ENCODE measurements at regions of chr12 and their contacts with region 1.

Region 1: DNA sequence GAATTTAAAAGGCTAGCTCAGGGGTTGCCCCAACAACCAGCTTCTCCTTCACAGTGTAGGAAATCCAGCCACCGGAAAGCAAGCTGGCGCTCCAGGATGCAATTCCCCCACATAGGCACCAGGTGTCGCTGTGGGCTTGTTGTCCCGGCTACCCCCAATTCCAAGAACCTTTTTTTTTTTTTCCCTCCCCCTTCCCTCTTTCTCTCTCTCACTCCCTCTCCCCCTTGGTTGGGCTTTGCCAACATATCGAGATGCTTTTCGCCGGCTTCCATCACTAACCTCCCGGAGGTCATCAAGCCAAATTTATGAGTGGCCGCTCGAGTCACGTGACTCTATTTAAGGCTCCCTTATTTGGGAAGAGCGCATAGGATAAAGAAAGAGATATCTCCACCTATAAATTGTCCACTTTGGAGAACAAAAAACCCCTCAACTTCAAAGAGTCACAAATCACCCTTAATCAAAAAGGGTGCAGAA is at the start of gene HOXC5:
- DNase-seq: peak; percentile 84
- ATAC-seq: peak; percentile 14; the same call in 1 of the 2 replicates
- H3K4me3 ChIP-seq: peak within 1 kb of the TSS; percentile 70
- H3K27ac ChIP-seq: no peak within 1 kb of the TSS
- H3K4me1 ChIP-seq: peaks cover 21% of the 10 kb centered on the region
- H3K27me3 ChIP-seq: no peaks in the 10 kb centered on the region
- CTCF ChIP-seq: peak; percentile 97
- total RNA-seq, gene HOXC5: 0.26 and 0.29 TPM in 2 replicates

Region 2: DNA sequence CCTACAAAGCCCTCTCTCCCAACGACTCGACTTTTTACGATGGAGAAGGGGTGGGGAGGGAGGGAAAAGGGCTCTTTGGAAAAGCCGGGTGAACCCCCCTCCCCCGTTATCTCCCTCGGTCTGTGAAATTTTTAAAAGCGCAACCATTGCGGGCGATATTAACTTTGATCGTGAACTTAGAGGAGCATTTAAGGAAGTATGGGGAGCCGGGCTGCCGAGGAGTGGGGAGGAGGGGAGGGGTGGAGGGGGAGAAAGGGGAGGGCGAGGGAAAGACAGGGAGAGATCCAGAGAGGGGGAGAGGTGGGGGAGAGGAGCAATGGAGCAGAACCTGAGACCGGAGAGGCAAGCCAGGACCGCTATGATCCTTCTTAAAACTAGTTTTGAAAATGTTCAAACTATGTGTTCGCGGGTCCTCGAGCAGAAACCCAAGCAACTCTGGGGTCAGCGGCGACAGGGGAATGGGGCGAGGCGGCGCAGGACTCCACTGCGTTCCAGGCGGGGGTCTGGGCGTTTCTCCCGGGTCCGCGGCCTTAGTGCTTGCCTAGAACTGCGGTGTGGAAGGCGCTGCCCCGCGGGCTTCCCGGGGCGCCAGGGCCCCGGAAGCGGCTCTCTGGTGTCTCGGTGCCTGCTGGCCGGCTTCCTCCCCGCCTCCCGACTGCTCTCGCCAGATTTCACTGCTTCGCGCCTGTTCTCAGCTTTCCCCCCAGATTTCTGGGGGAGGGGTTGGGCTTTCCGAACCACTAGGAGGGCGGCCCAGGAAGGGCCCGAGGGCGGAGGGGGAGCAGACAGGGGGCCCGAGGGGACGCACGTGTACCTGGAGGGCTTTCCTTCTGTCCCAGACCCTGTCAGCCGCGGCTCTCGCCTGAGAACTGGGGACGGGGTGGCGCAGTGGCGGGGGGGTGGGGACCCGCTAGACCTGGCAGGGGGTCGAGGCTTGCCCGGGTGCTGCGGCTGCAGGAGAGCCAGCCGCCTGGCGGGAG is 58.3 kb before region 1 on chr12 and contains the start of gene HOTAIR:
- CTCF ChIA-PET with region 1: no interaction called
- POLR2A ChIA-PET with region 1: no interaction called
- intact Hi-C with region 1: no loop called
- DNase-seq: peak; percentile 53
- ATAC-seq: peak; percentile 40
- H3K4me3 ChIP-seq: peak within 1 kb of the TSS; percentile 75
- H3K27ac ChIP-seq: no peak within 1 kb of the TSS
- H3K4me1 ChIP-seq: peaks cover 35% of the 10 kb centered on the region
- H3K27me3 ChIP-seq: no peaks in the 10 kb centered on the region
- CTCF ChIP-seq: no peak
- total RNA-seq, gene HOTAIR: 3.5 and 4.3 TPM in 2 replicates

Region 3: GRCh38 chr12:53984901-53985709 is 47.6 kb before region 1 on chr12 and contains the start of gene HOXC10:
- CTCF ChIA-PET with region 1: interaction called, 11 read pairs
- POLR2A ChIA-PET with region 1: no interaction called
- intact Hi-C with region 1: no loop called
- DNase-seq: peak; percentile 93
- ATAC-seq: peak; percentile 64
- H3K4me3 ChIP-seq: peak within 1 kb of the TSS; percentile 46; the same call in 1 of the 2 replicates
- H3K27ac ChIP-seq: no peak within 1 kb of the TSS
- H3K4me1 ChIP-seq: peaks cover 26% of the 10 kb centered on the region
- H3K27me3 ChIP-seq: no peaks in the 10 kb centered on the region
- CTCF ChIP-seq: peak; percentile 71
- total RNA-seq, gene HOXC10: 0.69 and 2.9 TPM in 2 replicates

Region 4: GRCh38 chr12:53995378-53996239 is 37.1 kb before region 1 on chr12:
- CTCF ChIA-PET with region 1: no interaction called
- POLR2A ChIA-PET with region 1: no interaction called
- intact Hi-C with region 1: no loop called
- DNase-seq: peak; percentile 83
- ATAC-seq: peak; percentile 70
- H3K4me3 ChIP-seq: peak overlapping the region; percentile 78
- H3K27ac ChIP-seq: peak overlapping the region; percentile 86
- H3K4me1 ChIP-seq: peaks cover 37% of the 10 kb centered on the region
- H3K27me3 ChIP-seq: no peaks in the 10 kb centered on the region
- CTCF ChIP-seq: no peak

Region 5: GRCh38 chr12:54017878-54018467 is 14.7 kb before region 1 on chr12:
- CTCF ChIA-PET with region 1: interaction called, 23 read pairs
- POLR2A ChIA-PET with region 1: interaction called, 8 read pairs
- intact Hi-C with region 1: no loop called
- DNase-seq: peak; percentile 86
- ATAC-seq: peak; percentile 73
- H3K4me3 ChIP-seq: peak overlapping the region; percentile 96
- H3K27ac ChIP-seq: peak overlapping the region; percentile 38
- H3K4me1 ChIP-seq: peaks cover 21% of the 10 kb centered on the region
- H3K27me3 ChIP-seq: no peaks in the 10 kb centered on the region
- CTCF ChIP-seq: no peak

Region 6: DNA sequence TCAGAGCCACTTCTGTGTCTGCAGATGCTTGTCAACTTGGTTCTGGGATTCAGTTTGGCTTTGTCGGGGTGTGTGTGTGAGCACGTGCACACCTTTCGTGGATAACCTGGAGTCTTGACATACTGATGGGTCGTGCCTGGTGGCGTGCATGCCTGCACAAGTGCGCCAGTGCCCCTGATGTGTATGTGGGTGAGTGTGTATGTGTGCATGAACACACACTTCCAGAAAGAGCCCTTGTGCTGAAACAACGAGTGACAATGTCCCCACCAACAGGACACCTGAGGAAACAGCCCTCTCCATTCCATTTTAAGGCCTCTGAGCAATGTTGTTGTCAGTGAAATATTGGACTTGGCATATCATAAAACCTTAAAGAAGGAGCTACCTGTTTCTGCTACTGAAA is 102.2 kb after region 1 on chr12:
- CTCF ChIA-PET with region 1: interaction called, 4 read pairs
- POLR2A ChIA-PET with region 1: no interaction called
- intact Hi-C with region 1: loop called (anchors 2 kb)
- DNase-seq: peak; percentile 17
- ATAC-seq: no peak; the same call in 1 of the 2 replicates
- H3K4me3 ChIP-seq: no peak overlapping the region
- H3K27ac ChIP-seq: no peak overlapping the region
- H3K4me1 ChIP-seq: no peaks in the 10 kb centered on the region
- H3K27me3 ChIP-seq: no peaks in the 10 kb centered on the region
- CTCF ChIP-seq: no peak; the same call in 1 of the 2 replicates

Region 7: GRCh38 chr12:54191550-54192022 is 158.9 kb after region 1 on chr12:
- CTCF ChIA-PET with region 1: interaction called, 20 read pairs
- POLR2A ChIA-PET with region 1: no interaction called
- intact Hi-C with region 1: loop called (anchors 1 kb)
- DNase-seq: peak; percentile 84
- ATAC-seq: peak; percentile 61
- H3K4me3 ChIP-seq: peak overlapping the region; percentile 26; the same call in 1 of the 2 replicates
- H3K27ac ChIP-seq: no peak overlapping the region
- H3K4me1 ChIP-seq: peaks cover 24% of the 10 kb centered on the region
- H3K27me3 ChIP-seq: no peaks in the 10 kb centered on the region
- CTCF ChIP-seq: peak; percentile 85

Region 8: GRCh38 chr12:54201001-54201794 is 168.5 kb after region 1 on chr12:
- CTCF ChIA-PET with region 1: interaction called, 36 read pairs
- POLR2A ChIA-PET with region 1: no interaction called
- intact Hi-C with region 1: no loop called
- DNase-seq: peak; percentile 77
- ATAC-seq: peak; percentile 89
- H3K4me3 ChIP-seq: no peak overlapping the region
- H3K27ac ChIP-seq: no peak overlapping the region
- H3K4me1 ChIP-seq: peaks cover 8% of the 10 kb centered on the region
- H3K27me3 ChIP-seq: no peaks in the 10 kb centered on the region
- CTCF ChIP-seq: peak; percentile 90

Region 9: GRCh38 chr12:54207484-54208294 is 175.0 kb after region 1 on chr12:
- CTCF ChIA-PET with region 1: interaction called, 10 read pairs
- POLR2A ChIA-PET with region 1: no interaction called
- intact Hi-C with region 1: no loop called
- DNase-seq: peak; percentile 88
- ATAC-seq: peak; percentile 92
- H3K4me3 ChIP-seq: no peak overlapping the region
- H3K27ac ChIP-seq: no peak overlapping the region
- H3K4me1 ChIP-seq: no peaks in the 10 kb centered on the region
- H3K27me3 ChIP-seq: no peaks in the 10 kb centered on the region
- CTCF ChIP-seq: peak; percentile 95